Activated T-helper 2 cell treated with anti-CD3 and anti-CD28 coated beads, Interferon-gamma antibody, Interleukin-2, Interleukin-4, amounts not matched to agents 10 μg/mL and 5 μg/mL and 100 μg/mL, durations not matched to agents 14 hours and 24 hours and 36 hours (primary cell): ENCODE measurements at regions of chr2 and their contacts with region 1.

Region 1: DNA sequence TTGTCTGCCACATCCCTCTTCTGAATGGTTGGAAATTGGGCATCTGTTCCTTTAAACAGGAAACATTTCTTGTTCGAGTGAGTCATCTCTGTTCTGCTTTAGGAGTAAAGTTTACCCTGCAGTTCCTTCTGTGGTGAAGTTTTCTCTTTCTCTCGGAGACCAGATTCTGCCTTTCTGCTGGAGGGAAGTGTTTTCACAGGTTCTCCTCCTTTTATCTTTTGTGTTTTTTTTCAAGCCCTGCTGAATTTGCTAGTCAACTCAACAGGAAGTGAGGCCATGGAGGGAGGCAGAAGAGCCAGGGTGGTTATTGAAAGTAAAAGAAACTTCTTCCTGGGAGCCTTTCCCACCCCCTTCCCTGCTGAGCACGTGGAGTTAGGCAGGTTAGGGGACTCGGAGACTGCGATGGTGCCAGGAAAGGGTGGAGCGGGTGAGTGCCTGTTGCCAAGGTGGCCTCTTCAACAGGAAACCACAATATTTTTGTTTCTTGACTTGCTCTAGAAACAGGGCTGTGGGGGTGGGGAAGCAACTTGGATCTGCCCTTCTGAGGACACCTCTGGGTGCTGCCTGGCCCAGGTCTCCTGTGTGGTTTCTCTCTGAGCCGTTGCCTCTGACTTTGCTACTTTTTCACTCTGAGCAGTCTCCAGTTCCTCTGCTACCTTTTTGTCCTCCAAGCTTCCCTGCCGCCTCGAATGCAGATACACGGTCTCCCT is 2.2 kb upstream of the CASP8 start:
- DNase-seq: peak; percentile 94
- H3K4me3 Mint-ChIP-seq: peak overlapping the region; percentile 89
- H3K27ac Mint-ChIP-seq: peak overlapping the region; percentile 97
- H3K4me1 Mint-ChIP-seq: peaks cover 69% of the 10 kb centered on the region
- H3K27me3 Mint-ChIP-seq: no peaks in the 10 kb centered on the region

Region 2: DNA sequence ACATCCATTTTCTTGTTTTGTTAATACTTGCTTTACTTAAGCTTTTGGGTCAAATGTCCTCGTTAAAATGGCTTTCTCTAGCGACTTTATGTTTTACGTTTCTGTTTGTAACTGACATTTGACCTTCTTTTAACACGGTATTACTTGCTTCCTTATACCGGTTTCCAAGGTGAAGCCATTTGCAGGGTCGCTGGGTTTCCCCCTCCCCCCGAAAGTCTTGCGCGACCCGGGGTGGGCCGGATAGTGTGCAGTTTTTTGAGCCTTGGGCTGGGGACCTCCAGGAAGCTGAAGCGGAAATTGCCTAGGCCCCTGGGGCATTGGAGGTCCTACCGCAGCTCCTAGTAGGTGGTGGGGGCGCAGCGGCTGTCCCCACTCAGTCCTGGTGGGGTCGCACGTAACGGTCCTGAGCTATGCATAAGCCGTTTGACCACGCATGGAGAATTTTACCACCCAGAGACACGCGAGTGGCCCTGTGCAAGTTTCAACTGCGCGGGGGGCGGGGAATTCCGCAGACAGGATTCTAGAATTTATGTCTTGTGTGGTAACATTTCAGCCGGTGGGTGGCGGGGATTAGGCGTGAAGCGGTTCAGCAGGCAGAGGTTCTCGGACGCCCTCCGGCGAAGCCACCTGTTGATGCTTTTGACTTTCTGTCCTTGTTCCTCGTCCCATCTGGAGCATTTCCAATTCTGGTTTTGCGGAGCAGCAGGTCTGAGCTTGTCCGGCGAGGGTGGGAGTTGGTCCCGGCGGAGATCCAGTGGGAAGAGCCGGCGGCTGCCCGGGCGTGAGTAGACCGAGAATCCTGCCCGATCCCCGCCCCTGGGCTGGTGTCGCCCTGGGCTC is 139.8 kb before region 1 on chr2:
- intact Hi-C with region 1: loop called (anchors 1 kb)
- DNase-seq: peak; percentile 76
- H3K4me3 Mint-ChIP-seq: peak overlapping the region; percentile 94
- H3K27ac Mint-ChIP-seq: peak overlapping the region; percentile 95
- H3K4me1 Mint-ChIP-seq: peaks cover 42% of the 10 kb centered on the region
- H3K27me3 Mint-ChIP-seq: no peaks in the 10 kb centered on the region

Region 3: GRCh38 chr2:201182650-201183364 is 75.3 kb before region 1 on chr2 and contains the start of gene CASP10:
- intact Hi-C with region 1: loop called (anchors 1 kb)
- DNase-seq: peak; percentile 32
- H3K4me3 Mint-ChIP-seq: peak within 1 kb of the TSS; percentile 96
- H3K27ac Mint-ChIP-seq: peak within 1 kb of the TSS; percentile 93
- H3K4me1 Mint-ChIP-seq: peaks cover 43% of the 10 kb centered on the region
- H3K27me3 Mint-ChIP-seq: no peaks in the 10 kb centered on the region
- total RNA-seq, gene CASP10: 14.3 and 17.3 TPM in 2 replicates

Region 4: DNA sequence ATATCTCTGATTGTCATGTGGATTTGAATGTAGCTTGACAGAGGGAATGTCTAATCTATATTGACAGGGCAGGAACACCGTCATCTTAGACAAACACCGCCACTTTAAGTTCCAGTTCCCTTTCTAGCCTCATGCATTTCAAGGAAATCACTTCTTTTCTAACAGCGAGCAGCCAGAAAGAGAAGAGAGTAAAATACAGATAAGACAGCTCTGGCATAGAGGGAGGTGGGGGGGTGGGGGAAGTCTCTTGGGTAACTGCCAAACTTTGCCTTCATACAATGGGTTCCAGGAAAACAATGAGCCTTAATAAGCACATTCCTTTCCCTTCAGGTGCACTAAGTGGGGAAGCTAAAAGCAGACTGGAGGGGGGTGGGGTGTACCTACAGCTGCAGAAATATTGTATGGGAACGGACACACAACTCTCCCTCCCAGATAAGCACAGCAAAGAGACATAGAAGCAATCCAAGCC is 38.0 kb before region 1 on chr2:
- intact Hi-C with region 1: no loop called
- DNase-seq: no peak
- H3K4me3 Mint-ChIP-seq: no peak overlapping the region
- H3K27ac Mint-ChIP-seq: no peak overlapping the region
- H3K4me1 Mint-ChIP-seq: peaks cover 34% of the 10 kb centered on the region
- H3K27me3 Mint-ChIP-seq: no peaks in the 10 kb centered on the region

Region 5: DNA sequence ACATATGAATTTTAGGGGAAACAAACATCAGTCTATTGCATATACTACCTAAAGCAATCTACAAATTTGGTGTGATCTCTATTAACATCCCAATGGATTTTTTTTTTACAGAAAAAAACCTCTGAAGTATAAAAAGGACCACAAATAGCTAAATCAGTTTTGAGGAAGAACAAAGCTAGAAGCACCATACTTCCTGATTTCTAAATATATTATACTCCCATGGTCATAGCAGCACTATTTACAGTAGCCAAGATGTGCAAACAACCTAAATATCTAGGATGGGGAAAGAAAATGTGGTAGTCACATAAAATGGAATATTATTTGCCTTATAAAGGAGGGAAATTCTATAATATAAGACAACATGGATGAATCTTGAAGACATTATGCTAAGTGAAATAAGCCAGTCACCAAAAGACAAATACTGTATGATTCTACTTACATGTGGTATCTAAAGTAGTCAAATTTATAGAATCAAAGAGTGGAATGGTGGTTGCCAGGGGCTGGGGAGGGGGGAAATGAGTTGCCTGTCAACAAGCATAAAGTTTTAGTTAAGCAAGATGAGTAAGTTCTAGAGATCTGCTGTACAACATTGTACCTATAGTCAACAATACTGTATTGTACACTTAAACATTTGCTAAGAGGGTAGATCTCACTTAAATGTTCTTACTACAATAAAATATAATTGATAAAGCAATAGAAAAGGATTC is 15.4 kb before region 1 on chr2:
- intact Hi-C with region 1: no loop called
- DNase-seq: no peak
- H3K4me3 Mint-ChIP-seq: no peak overlapping the region
- H3K27ac Mint-ChIP-seq: no peak overlapping the region
- H3K4me1 Mint-ChIP-seq: peaks cover 22% of the 10 kb centered on the region
- H3K27me3 Mint-ChIP-seq: no peaks in the 10 kb centered on the region

Region 6: GRCh38 chr2:201298462-201299052 is 40.4 kb after region 1 on chr2:
- intact Hi-C with region 1: no loop called
- DNase-seq: no peak
- H3K4me3 Mint-ChIP-seq: no peak overlapping the region
- H3K27ac Mint-ChIP-seq: no peak overlapping the region
- H3K4me1 Mint-ChIP-seq: peaks cover 4% of the 10 kb centered on the region
- H3K27me3 Mint-ChIP-seq: no peaks in the 10 kb centered on the region

Region 7: DNA sequence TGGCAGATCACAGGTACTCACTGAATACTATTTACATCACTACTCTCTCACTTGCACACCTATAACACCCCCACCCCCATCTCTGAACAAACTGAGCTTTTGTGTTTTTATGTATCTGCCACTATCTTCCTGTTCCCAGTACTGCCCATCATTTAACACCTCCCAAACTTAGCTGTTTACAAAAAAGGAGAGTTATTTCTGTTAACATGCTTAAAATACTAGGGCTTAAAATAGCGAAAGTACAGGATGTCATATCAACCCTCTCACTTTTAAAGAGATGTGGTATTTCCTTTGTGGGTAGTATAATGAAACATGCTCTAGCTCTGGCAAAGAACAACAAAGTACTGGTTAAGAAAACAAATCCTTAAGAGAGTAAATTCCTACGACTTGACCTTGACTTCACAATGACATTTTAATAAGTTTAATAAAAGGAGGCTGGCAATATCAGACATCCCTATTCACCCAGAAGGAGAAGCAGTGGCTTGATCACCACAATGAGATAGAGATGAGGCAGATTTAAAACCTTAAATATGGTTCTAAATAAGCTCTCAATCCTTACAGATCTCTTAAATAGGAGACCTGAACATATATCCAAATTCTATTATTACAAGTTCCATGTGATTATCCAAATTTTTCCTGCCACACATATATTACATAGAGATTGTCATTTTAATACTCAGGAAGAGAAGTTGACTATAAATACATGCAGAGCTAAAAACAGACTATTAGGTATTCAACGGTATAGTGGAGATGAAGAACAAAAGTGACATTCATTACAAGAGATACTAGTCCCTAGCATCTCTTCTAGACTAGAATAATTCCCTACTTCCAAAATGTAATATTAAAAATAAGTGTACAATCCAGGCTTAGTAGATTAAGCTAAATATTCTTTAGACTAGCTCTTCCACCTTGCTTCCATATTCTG is 156.2 kb after region 1 on chr2:
- intact Hi-C with region 1: loop called (anchors 2 kb)
- DNase-seq: no peak
- H3K4me3 Mint-ChIP-seq: no peak overlapping the region
- H3K27ac Mint-ChIP-seq: no peak overlapping the region
- H3K4me1 Mint-ChIP-seq: peaks cover 13% of the 10 kb centered on the region
- H3K27me3 Mint-ChIP-seq: no peaks in the 10 kb centered on the region

Region 8: DNA sequence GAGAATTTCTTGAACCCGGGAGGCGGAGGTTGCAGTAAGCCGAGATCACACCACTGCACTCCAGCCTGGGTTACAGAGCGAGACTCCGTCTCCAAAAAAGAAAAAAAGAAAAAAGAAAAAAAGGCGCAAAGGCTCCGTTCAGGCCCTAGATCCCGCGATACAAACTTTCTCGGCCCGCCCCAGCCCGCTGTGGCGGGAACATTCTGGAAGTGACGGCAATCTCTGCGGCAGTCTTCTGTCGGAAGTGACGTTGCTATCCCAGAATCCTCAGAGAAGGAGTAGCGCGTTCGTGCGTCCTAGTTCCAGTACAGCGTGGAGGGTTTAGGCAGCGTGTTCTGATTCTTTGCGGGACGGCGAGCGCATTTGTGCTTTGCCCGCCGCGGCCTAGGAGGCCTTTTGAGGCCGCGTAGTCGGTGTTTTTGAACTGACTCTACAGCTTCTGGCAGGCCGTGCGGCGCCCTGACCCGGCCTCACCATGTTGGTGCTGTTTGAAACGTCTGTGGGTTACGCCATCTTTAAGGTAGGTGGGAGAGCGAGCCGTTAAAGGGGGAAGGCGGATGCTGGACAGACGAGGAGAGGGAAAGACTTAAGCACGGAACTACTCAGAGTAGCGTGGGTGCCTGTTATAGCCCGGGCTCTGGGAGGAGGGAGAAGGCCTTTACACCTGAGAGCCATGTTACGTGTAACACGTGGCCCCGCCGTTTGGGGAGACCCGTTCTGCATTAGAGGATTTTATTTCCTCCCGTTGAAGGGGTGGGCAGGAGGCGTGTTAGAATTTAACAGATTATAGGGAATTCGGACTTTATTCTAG is 1007.6 kb after region 1 on chr2 and contains the start of gene NOP58:
- intact Hi-C with region 1: loop called (anchors 10 kb)
- DNase-seq: peak; percentile 92
- H3K4me3 Mint-ChIP-seq: peak within 1 kb of the TSS; percentile 58
- H3K27ac Mint-ChIP-seq: peak within 1 kb of the TSS; percentile 69
- H3K4me1 Mint-ChIP-seq: peaks cover 15% of the 10 kb centered on the region
- H3K27me3 Mint-ChIP-seq: no peaks in the 10 kb centered on the region
- total RNA-seq, gene NOP58: 206 and 211 TPM in 2 replicates